ENCODE measurements at regions of chr6 and their contacts with region 1.

Region 1: GRCh38 chr6:80541181-80541580 is 434.7 kb downstream of the BCKDHB start:
- DNase-seq: peak; percentile 62 to 84
- H3K4me3 ChIP-seq: no peak overlapping the region
- H3K27ac ChIP-seq: peak overlapping the region; percentile 66
- H3K4me1 ChIP-seq: peaks cover 16% of the 10 kb centered on the region
- H3K27me3 ChIP-seq: no peaks in the 10 kb centered on the region
- CTCF ChIP-seq: no peak

Region 2: GRCh38 chr6:80126657-80127345 is 414.4 kb before region 1 on chr6:
- CTCF ChIA-PET with region 1: no interaction called
- POLR2A ChIA-PET with region 1: no interaction called
- intact Hi-C with region 1: loop called (anchors 10 kb)
- DNase-seq: no peak
- H3K4me3 ChIP-seq: no peak overlapping the region
- H3K27ac ChIP-seq: no peak overlapping the region
- H3K4me1 ChIP-seq: peaks cover 32% of the 10 kb centered on the region
- H3K27me3 ChIP-seq: no peaks in the 10 kb centered on the region
- CTCF ChIP-seq: no peak

Region 3: DNA sequence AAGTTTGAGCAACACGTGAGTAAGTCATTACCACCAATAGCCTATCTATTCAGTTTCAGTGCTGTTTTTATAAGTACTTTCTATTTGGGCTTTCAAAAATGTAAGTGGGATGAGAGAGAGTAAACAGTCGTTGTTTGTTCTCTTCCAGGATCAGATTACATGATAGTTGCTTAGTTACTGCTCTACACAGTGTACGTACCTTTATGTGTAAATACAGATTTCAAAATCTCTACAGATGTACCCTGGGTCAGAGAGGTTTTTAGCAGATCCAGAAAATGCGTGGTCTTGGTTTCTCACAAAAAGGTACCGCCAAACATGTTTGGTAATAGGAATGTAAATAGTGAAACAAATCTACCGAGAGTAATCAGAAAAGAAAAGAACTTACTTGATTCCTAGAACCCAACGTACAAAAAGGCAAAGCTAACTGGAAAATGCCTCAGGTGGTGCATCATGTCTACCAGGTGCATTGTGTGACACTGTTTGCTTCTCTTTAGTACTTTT is 13.6 kb before region 1 on chr6:
- CTCF ChIA-PET with region 1: no interaction called
- POLR2A ChIA-PET with region 1: interaction called, 10 read pairs
- intact Hi-C with region 1: no loop called
- DNase-seq: peak; percentile 24 to 91
- H3K4me3 ChIP-seq: peak overlapping the region; percentile 37; the same call in 1 of the 2 replicates
- H3K27ac ChIP-seq: peak overlapping the region; percentile 36
- H3K4me1 ChIP-seq: peaks cover 23% of the 10 kb centered on the region
- H3K27me3 ChIP-seq: no peaks in the 10 kb centered on the region
- CTCF ChIP-seq: no peak

Measured in PC-9 (cell line).